ENCODE measurements at regions of chr14 and their contacts with region 1.

Region 1: DNA sequence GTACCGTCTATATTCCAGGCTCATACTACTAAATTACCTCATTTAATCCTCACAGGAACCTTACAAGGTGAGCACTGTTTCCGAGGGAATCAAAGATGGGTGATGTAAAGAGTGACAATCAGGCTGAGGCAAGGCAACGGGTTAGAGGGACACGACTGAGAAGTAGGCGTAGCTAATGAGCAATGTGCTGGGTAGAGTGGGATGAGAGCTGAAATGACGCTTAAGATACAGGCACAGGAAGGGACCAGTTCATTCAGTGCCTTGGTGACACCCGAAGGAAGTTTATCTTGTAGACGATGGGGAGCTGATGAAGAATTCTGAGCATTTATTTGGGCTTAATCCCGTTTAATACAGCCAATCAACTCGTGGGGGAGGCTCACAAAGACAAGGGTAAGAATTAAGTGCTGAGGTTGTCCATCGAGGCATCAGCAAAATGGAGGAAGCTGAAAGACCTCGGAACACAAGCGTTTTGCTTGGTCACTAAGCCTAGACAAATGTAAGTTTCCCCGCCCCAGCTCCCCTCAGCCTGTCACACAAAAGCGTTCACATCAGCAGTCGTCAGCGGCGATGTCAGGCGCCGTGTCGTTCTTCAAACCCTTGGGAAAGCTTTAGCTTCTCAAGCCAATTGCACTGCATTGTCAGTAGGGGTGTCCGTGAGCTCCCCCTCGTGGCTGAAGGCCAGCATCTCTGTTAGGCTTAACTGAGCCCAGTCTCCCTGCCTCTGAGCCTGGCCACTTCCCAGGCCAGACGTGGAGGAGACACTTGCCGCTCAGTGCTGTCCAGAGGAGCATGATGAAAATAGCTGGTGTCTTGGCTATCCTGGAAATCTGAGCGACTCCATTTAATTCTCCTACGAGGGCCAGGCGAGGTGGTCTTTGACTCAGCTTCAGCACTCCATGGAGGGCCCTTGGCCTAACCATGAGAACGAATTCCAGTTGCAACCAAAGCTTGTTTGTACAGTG is 288.5 kb upstream of the G2E3 start:
- DNase-seq: peak; percentile 58
- ATAC-seq: peak; percentile 100
- H3K4me3 ChIP-seq: peak overlapping the region; percentile 22 to 44
- H3K27ac ChIP-seq: no peak overlapping the region
- H3K4me1 ChIP-seq: peaks cover 3% of the 10 kb centered on the region
- H3K27me3 ChIP-seq: no peaks in the 10 kb centered on the region
- CTCF ChIP-seq: peak; percentile 90

Region 2: DNA sequence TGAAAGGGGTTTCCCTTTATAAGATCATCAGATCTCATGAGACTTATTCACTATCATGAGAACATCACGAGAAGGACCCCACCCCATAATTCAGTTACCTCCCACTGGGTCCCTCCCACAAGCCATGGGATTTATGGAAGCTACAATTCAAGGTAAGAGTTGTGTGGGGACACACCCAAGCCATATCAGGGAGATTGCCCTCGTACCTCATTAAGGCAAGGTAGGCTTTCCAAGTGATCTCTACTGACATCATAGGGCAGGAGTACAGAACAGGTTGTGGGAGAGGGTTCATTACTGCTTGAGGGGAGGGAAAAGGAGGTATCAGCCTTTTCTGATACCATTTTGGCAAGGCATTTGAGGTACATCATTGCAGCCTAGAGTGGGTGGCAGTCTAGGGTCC is 867.4 kb before region 1 on chr14:
- CTCF ChIA-PET with region 1: no interaction called
- POLR2A ChIA-PET with region 1: no interaction called
- in situ Hi-C with region 1: no loop called
- intact Hi-C with region 1: no loop called
- DNase-seq: no peak
- ATAC-seq: no peak
- H3K4me3 ChIP-seq: no peak overlapping the region
- H3K27ac ChIP-seq: no peak overlapping the region
- H3K4me1 ChIP-seq: no peaks in the 10 kb centered on the region
- H3K27me3 ChIP-seq: no peaks in the 10 kb centered on the region
- CTCF ChIP-seq: no peak

Region 3: GRCh38 chr14:30015489-30015888 is 255.0 kb before region 1 on chr14:
- CTCF ChIA-PET with region 1: no interaction called
- POLR2A ChIA-PET with region 1: no interaction called
- in situ Hi-C with region 1: no loop called
- intact Hi-C with region 1: no loop called
- DNase-seq: no peak
- ATAC-seq: no peak
- H3K4me3 ChIP-seq: no peak overlapping the region
- H3K27ac ChIP-seq: no peak overlapping the region
- H3K4me1 ChIP-seq: no peaks in the 10 kb centered on the region
- H3K27me3 ChIP-seq: no peaks in the 10 kb centered on the region
- CTCF ChIP-seq: no peak

Region 4: DNA sequence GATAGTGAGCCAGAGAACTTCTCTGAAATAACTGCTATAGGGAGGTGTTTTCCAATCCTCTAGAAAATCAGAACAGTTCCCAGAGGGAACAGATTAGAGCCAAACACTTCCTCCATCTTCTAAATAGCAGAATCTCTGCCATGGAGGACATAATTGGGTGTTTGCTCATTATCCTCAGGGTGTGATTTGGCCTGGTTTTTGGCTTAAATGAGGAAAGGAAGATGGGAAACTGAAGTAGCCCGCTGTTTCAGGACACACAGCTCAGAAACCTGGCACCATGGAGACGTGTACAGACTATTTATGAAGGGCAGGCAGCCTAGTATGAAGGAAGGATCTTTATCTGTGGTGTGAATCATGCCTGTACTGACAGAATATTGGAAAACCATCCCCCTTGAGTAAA is 111.1 kb before region 1 on chr14:
- CTCF ChIA-PET with region 1: interaction called, 11 read pairs
- POLR2A ChIA-PET with region 1: no interaction called
- in situ Hi-C with region 1: no loop called
- intact Hi-C with region 1: no loop called
- DNase-seq: no peak
- ATAC-seq: no peak
- H3K4me3 ChIP-seq: no peak overlapping the region
- H3K27ac ChIP-seq: no peak overlapping the region
- H3K4me1 ChIP-seq: no peaks in the 10 kb centered on the region
- H3K27me3 ChIP-seq: no peaks in the 10 kb centered on the region
- CTCF ChIP-seq: no peak

Region 5: GRCh38 chr14:30234966-30235365 is 35.5 kb before region 1 on chr14:
- CTCF ChIA-PET with region 1: no interaction called
- POLR2A ChIA-PET with region 1: no interaction called
- in situ Hi-C with region 1: no loop called
- intact Hi-C with region 1: no loop called
- DNase-seq: no peak
- ATAC-seq: no peak
- H3K4me3 ChIP-seq: no peak overlapping the region
- H3K27ac ChIP-seq: no peak overlapping the region
- H3K4me1 ChIP-seq: no peaks in the 10 kb centered on the region
- H3K27me3 ChIP-seq: no peaks in the 10 kb centered on the region
- CTCF ChIP-seq: no peak

Region 6: GRCh38 chr14:30356438-30357202 is 86.1 kb after region 1 on chr14:
- CTCF ChIA-PET with region 1: interaction called, 11 read pairs
- POLR2A ChIA-PET with region 1: no interaction called
- in situ Hi-C with region 1: no loop called
- intact Hi-C with region 1: no loop called
- DNase-seq: no peak
- ATAC-seq: no peak
- H3K4me3 ChIP-seq: no peak overlapping the region
- H3K27ac ChIP-seq: no peak overlapping the region
- H3K4me1 ChIP-seq: no peaks in the 10 kb centered on the region
- H3K27me3 ChIP-seq: no peaks in the 10 kb centered on the region
- CTCF ChIP-seq: no peak